Ovary (tissue), 10 donors: ENCODE measurements at regions of chr18 and their contacts with region 1.

Region 1: GRCh38 chr18:61893971-61894750 is 1.4 kb upstream of the RNF152 start:
- DNase-seq: peak; percentile 66 to 81 (median 80)
- H3K4me3 ChIP-seq: peak overlapping the region; percentile 96
- H3K27ac ChIP-seq: peak overlapping the region; percentile 56 to 66
- H3K4me1 ChIP-seq: no peaks in the 10 kb centered on the region
- H3K27me3 ChIP-seq: no peaks in the 10 kb centered on the region
- CTCF ChIP-seq: peak in 2 of 3 donors; percentile 29 to 32
- EP300 ChIP-seq: no peak
- POLR2A ChIP-seq: peak; percentile 33

Region 2: GRCh38 chr18:61581578-61582201 is 312.5 kb before region 1 on chr18:
- intact Hi-C with region 1: loop called in 2 of 4 experiments (anchors 5 kb)
- DNase-seq: peak; percentile 65 to 88 (median 80)
- H3K4me3 ChIP-seq: peak overlapping the region; percentile 42
- H3K27ac ChIP-seq: peak overlapping the region; percentile 5 to 57
- H3K4me1 ChIP-seq: peaks cover 2% of the 10 kb centered on the region
- H3K27me3 ChIP-seq: no peaks in the 10 kb centered on the region
- CTCF ChIP-seq: peak; percentile 81 to 99 (median 91)
- EP300 ChIP-seq: no peak
- POLR2A ChIP-seq: no peak

Region 3: GRCh38 chr18:61635901-61636528 is 258.1 kb before region 1 on chr18:
- intact Hi-C with region 1: loop called in 2 of 4 experiments (anchors 2 to 10 kb)
- DNase-seq: peak; percentile 17 to 53 (median 37)
- H3K4me3 ChIP-seq: no peak overlapping the region
- H3K27ac ChIP-seq: no peak overlapping the region
- H3K4me1 ChIP-seq: peaks cover 5% of the 10 kb centered on the region
- H3K27me3 ChIP-seq: no peaks in the 10 kb centered on the region
- CTCF ChIP-seq: peak; percentile 12 to 57 (median 36)
- EP300 ChIP-seq: no peak
- POLR2A ChIP-seq: no peak

Region 4: GRCh38 chr18:61743775-61744531 is 150.2 kb before region 1 on chr18:
- intact Hi-C with region 1: loop called in 2 of 4 experiments (anchors 5 to 10 kb)
- DNase-seq: peak in 1 of 5 donors; percentile 49
- H3K4me3 ChIP-seq: no peak overlapping the region
- H3K27ac ChIP-seq: no peak overlapping the region
- H3K4me1 ChIP-seq: peaks cover 6% of the 10 kb centered on the region
- H3K27me3 ChIP-seq: no peaks in the 10 kb centered on the region
- CTCF ChIP-seq: no peak
- EP300 ChIP-seq: peak; percentile 25
- POLR2A ChIP-seq: no peak

Region 5: DNA sequence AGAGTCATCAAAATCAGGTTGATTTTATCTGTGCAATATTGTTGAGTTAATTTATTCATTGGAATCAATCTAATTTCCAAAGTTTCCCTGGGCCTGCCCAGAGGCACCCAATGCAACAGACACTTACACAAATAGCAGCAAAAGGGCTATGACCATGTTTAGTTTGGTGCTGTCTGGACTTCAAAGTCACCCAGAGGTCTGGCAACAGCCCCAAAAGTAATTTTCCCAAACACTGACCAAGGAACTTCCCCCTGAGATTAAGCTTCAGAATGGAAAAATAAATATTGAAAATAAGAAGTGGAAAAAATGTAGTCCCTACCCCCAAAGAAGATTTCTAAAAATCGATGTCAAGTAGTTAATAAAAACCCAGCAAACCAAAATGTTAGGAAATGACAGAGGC is 69.5 kb after region 1 on chr18:
- intact Hi-C with region 1: loop called in 1 of 4 experiments (anchors 10 kb)
- DNase-seq: peak in 1 of 5 donors; percentile 29
- H3K4me3 ChIP-seq: no peak overlapping the region
- H3K27ac ChIP-seq: no peak overlapping the region
- H3K4me1 ChIP-seq: peaks cover 6% of the 10 kb centered on the region
- H3K27me3 ChIP-seq: no peaks in the 10 kb centered on the region
- CTCF ChIP-seq: no peak
- EP300 ChIP-seq: no peak
- POLR2A ChIP-seq: no peak

Region 6: DNA sequence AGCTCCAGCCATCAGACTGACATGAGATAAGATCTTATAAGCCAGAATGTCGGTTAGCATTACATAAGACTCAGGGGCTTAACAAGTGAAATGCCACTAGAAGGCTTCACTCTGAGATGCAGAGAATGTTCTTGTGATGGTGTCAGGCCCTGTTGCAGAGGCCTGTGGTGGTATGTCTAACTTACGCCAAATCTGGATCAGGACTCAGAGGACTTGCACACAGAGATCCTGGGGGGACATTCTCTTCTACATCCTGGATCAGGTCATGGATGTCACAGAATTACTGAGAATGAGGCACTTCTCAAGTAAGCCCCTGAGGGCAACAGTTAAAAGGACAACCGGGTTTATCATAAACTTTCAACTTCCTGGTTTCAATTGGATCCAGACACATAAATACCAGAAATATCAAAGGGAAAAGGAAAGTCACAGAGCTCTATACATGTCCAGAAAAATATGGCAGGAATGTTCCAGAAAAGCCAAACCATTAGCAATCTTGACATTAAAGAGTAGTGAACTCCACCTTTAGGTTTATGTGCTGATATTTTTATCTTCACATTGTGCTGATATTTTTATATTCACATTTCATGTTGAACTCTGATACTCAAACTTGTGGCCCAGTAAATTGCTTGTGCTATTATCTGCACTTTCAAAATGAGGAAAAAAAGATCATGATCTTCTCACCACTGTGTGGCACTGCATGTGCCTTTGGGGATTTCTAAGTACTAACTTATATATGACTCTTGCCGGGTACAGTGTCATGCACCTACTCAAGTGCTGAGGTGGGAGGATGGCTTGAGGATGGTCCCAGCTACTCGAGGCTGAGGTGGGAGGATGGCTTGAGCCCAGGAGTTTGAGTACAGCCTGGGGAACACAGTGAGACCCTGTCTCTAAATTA is 136.2 kb after region 1 on chr18:
- intact Hi-C with region 1: loop called in 1 of 4 experiments (anchors 10 kb)
- DNase-seq: no peak
- H3K4me3 ChIP-seq: no peak overlapping the region
- H3K27ac ChIP-seq: no peak overlapping the region
- H3K4me1 ChIP-seq: no peaks in the 10 kb centered on the region
- H3K27me3 ChIP-seq: no peaks in the 10 kb centered on the region
- CTCF ChIP-seq: no peak
- EP300 ChIP-seq: no peak
- POLR2A ChIP-seq: no peak

Region 7: GRCh38 chr18:62069556-62069955 is 175.4 kb after region 1 on chr18:
- intact Hi-C with region 1: no loop called
- DNase-seq: no peak
- H3K4me3 ChIP-seq: no peak overlapping the region
- H3K27ac ChIP-seq: no peak overlapping the region
- H3K4me1 ChIP-seq: no peaks in the 10 kb centered on the region
- H3K27me3 ChIP-seq: no peaks in the 10 kb centered on the region
- CTCF ChIP-seq: no peak
- EP300 ChIP-seq: no peak
- POLR2A ChIP-seq: no peak